ENCODE measurements at regions of chr17 and their contacts with region 1.

Region 1: GRCh38 chr17:55654821-55655220 is 67.8 kb downstream of the TMEM100 start:
- DNase-seq: no peak
- H3K4me3 ChIP-seq: no peak overlapping the region
- H3K27ac ChIP-seq: no peak overlapping the region
- H3K4me1 ChIP-seq: no peaks in the 10 kb centered on the region
- H3K27me3 ChIP-seq: no peaks in the 10 kb centered on the region
- CTCF ChIP-seq: no peak
- EP300 ChIP-seq: no peak
- POLR2A ChIP-seq: no peak

Region 2: DNA sequence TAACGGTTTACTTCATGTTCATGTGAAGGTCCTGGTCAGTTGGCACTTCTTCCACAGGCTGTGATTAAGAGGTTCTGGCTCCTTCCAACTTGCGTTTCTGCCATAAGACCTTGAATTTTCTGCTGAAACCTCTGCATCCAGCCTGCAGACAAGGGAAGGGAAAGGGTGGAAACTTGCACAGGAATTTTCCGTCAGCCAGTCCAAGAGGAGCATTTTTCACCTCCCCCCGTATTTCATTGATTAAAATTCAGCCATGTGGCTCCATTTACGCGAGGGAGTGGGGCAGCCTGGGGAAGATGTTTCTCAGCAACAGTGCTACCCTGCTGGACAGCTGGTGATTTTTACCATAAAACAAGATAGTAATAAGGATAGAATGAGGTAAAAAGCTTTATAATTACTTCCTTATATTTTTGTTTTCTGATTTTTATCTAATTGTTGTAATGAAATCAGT is 42.1 kb before region 1 on chr17:
- intact Hi-C with region 1: no loop called
- DNase-seq: peak; percentile 57 to 77 (median 67)
- H3K4me3 ChIP-seq: no peak overlapping the region
- H3K27ac ChIP-seq: peak overlapping the region in 1 of 2 donors; percentile 78
- H3K4me1 ChIP-seq: peaks cover 9% of the 10 kb centered on the region
- H3K27me3 ChIP-seq: no peaks in the 10 kb centered on the region
- CTCF ChIP-seq: peak in 1 of 3 donors; percentile 11
- EP300 ChIP-seq: no peak
- POLR2A ChIP-seq: no peak

Region 3: GRCh38 chr17:55816532-55817396 is 161.9 kb after region 1 on chr17:
- intact Hi-C with region 1: loop called in 1 of 4 experiments (anchors 5 kb)
- DNase-seq: no peak
- H3K4me3 ChIP-seq: no peak overlapping the region
- H3K27ac ChIP-seq: no peak overlapping the region
- H3K4me1 ChIP-seq: no peaks in the 10 kb centered on the region
- H3K27me3 ChIP-seq: no peaks in the 10 kb centered on the region
- CTCF ChIP-seq: no peak
- EP300 ChIP-seq: no peak
- POLR2A ChIP-seq: no peak